ENCODE measurements at regions of chr19 and their contacts with region 1.

Region 1: DNA sequence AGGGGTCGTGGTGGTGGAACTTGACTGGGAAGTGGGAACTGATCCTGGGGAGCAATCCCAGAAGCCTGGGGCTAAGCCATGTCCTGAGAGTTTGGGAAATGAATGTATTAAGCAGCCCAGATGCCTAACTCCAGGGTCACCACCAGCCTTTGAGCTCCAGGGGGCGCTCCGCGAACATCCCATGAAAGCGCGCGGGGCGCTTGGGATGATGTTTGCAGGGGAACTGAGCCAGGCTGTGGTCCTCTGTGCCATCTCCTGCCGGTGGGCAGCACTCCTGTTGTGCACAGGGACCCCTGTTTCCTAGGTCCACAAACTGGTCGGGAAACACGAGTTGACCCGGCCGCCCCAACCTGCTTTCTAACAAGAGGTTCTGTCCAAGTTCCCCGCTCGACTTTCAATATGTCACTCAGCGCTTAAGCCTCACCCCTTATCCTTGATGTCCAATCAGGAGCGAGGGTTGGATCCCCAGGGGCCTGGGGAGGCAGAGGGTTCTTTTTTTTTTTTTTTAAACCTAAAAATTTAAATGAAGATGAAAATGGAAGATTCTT is 14.4 kb downstream of the LEUTX start:
- DNase-seq: peak; percentile 84
- CTCF ChIP-seq: peak; percentile 87

Region 2: DNA sequence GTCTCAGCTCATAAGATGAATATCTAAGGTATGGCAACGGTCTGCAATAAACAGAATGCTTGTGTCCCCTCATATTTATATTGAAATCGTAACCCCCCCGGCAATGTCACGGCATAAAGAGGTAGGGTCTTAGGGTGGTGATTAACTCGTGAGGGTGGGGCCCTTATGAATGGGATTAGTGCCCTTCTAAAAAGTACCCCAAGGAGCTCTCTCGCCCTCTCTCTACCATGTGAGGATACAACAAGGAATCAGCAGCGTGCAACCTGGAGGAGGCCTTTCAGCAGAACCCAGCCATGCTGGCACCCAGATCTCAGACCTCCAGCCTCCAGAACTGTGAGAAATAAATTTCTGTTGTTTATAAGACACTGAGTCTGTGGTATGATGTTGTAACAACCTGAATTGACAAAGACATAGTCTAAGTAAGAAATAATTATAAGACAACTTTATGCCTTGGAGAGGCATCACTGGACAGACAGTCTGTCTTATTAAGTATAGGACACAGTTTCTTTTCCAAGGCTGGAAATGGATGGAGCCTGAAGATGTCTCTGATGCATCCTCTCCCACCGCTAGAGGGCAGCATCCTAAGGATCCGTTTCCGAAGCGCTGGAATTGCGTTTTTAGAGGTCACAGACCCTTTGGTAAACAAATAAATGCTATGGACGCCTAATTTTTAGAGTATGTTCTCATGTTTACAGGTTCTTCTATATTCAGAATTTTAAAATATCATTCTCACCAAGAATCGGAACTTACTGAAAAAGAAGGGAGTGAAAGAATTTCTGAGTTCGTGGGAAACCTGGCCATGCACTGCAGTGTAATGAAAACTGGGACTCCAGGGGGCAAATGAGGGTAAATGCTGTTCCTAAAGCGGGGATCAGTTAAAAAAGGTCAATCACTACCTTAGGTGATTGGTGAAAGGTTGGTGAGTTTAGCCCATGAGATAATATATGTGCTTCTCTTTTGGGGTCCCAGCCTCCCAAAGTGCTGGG is 27.7 kb before region 1 on chr19:
- CTCF ChIA-PET with region 1: interaction called, 25 read pairs
- POLR2A ChIA-PET with region 1: no interaction called
- DNase-seq: no peak
- CTCF ChIP-seq: peak; percentile 38

Region 3: DNA sequence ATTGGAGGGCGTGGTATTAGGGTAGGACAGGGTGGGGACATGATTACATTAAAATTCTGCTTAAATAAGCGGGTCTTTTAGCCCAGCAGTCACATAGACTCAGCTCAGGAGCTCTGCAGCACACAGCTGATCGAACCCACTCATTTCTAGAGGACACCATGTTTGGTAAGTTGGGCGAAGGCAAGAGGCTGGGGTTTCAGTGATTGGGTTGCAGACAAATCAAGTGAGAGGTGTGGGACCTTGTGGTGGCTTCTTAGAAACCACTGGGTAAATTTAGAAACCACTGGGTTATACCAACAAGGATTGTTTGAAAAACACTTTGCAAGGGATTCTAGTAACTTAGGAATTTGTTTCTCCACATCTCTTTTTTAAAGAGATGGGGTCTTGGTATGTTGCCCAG is 14.3 kb before region 1 on chr19 and contains the start of gene LEUTX:
- CTCF ChIA-PET with region 1: interaction called, 31 read pairs
- POLR2A ChIA-PET with region 1: no interaction called
- DNase-seq: peak; percentile 21
- CTCF ChIP-seq: no peak

Region 4: DNA sequence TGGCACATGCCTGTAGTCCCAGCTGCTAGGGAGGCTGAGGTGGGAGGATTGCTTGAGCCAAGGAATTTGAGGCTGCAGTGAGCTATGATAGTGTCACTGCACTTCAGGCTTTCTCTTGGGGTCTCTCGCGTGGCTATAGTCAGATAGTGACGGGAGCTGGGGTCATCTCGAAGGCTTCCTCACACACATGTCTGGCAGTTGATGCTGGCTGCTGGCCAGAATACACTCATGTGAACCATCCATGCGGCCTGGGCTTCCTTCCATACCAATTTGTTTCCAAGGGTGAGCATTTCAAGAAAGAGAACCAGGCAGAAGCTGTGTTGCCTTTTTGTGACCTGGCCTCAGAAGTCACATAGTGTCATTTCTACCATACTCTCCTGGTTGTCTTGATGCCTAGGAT is 12.0 kb after region 1 on chr19:
- CTCF ChIA-PET with region 1: interaction called, 26 read pairs
- POLR2A ChIA-PET with region 1: no interaction called
- DNase-seq: no peak
- CTCF ChIP-seq: no peak

Region 5: GRCh38 chr19:39820696-39821095 is 27.6 kb after region 1 on chr19:
- CTCF ChIA-PET with region 1: interaction called, 10 read pairs
- POLR2A ChIA-PET with region 1: no interaction called
- DNase-seq: no peak
- CTCF ChIP-seq: no peak

Region 6: DNA sequence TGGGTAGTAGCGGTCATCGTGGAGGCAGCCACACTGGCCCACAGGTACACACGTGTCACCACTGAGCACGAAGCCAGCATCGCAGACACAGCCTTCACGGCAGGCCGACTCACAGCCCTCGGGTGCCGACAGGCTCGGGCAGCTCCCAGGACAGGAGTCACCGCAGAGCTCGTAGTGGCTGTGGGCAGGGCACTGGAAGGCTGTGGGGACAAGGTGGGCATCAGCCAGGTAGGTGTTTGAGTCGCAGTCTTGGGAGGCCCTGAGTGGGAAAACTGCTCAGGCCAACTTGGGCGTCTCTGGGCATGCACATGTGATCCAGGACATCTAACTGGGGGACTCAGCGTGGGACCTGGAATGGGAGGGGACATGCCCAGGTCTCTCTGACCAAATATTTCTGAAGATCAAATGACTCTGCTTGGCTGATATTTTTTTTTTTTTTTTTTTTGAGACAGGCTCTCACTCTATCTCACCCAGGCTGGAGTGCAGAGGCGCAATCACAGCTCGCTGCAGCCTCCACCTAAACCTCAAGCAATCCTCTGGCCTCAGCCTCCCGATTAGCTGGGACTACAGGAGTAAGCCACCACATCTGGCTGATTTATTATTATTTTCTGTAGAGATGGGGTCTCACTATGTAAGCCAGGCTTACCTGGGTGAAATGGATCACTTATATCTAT is 96.9 kb after region 1 on chr19:
- CTCF ChIA-PET with region 1: no interaction called
- POLR2A ChIA-PET with region 1: no interaction called
- DNase-seq: no peak
- CTCF ChIP-seq: no peak